Gastrocnemius medialis (tissue), 4 donors: ENCODE measurements at regions of chr1 and their contacts with region 1.

Region 1: DNA sequence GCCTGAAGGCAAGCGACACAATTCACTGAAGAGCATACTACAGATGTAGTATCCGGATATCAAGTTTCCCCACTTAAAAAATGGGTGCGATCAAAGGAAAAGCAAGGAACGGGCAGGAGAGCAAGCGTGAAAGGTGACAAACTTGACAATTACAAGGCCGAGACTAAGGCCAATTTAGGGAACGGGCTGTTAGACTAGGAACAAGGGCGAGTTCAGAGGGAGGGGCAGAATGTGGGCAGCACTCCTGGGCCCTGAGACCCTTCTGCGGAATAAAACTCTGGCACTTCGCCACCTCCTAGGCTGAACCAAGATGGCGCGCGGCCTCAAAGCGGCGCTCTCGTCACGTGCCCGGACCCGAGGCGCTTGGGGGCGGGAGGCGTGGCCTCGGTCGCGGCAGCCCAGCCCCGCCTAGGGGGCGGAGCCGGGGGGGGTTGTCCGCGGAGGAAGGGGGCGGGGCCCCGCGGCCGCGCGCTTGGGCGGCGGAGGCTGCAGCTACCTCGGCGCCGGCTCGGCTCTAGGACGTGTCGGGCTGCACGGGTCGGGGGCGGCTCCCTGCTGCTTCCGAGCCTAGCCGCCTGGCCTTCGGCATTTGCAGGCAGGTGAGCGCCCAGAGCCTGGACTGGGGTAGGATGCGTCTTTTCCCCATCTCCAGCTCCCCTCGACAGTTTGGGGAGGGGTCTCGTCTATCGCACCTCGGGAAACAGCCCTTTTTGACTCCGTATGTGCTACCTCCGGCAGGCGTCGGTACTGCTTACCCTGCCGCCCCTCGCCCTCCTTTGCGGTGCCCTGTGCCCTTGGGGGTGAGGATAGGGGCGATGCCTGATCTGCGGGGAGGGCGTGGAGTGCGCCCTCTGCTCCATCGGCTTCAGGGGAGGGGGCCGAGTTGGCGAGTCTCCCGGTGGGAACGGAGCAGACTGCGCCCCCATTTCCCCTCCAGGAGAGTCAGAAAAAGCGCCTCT is at the start of gene PPFIA4:
- DNase-seq: peak; percentile 75 to 85
- ATAC-seq: peak; percentile 57 to 59
- H3K4me3 ChIP-seq: peak within 1 kb of the TSS; percentile 74 to 89 (median 85)
- H3K27ac ChIP-seq: peak within 1 kb of the TSS; percentile 89 to 98 (median 94)
- H3K4me1 ChIP-seq: peaks cover 29 to 42% of the 10 kb centered on the region in 2 donors
- H3K27me3 ChIP-seq: no peaks in the 10 kb centered on the region
- CTCF ChIP-seq: peak in 4 of 5 experiments; percentile 6 to 25 (median 10)
- POLR2A ChIP-seq: peak; percentile 90 to 95
- total RNA-seq, gene PPFIA4: 8.4 to 45.5 (median 33.1) TPM

Region 2: GRCh38 chr1:202957733-202958543 is 68.4 kb before region 1 on chr1 and contains the start of gene ADIPOR1:
- in situ Hi-C with region 1: no loop called
- intact Hi-C with region 1: loop called (anchors 2 kb)
- DNase-seq: peak; percentile 91 to 93
- ATAC-seq: peak; percentile 43 to 49
- H3K4me3 ChIP-seq: peak within 1 kb of the TSS; percentile 85 to 98 (median 94)
- H3K27ac ChIP-seq: peak within 1 kb of the TSS; percentile 98 to 100 (median 100)
- H3K4me1 ChIP-seq: peaks cover 79 to 80% of the 10 kb centered on the region in 2 donors
- H3K27me3 ChIP-seq: no peaks in the 10 kb centered on the region
- CTCF ChIP-seq: no peak
- POLR2A ChIP-seq: peak; percentile 97 to 98
- total RNA-seq, gene ADIPOR1: 103 to 133 (median 119) TPM

Region 3: GRCh38 chr1:203006948-203007871 is 19.1 kb before region 1 on chr1 and contains the start of gene TMEM183A:
- in situ Hi-C with region 1: no loop called
- intact Hi-C with region 1: loop called (anchors 2 kb)
- DNase-seq: peak; percentile 93 to 96
- ATAC-seq: peak; percentile 96 to 98
- H3K4me3 ChIP-seq: peak within 1 kb of the TSS; percentile 91 to 100 (median 98)
- H3K27ac ChIP-seq: peak within 1 kb of the TSS; percentile 93 to 99 (median 97)
- H3K4me1 ChIP-seq: peaks cover 17 to 22% of the 10 kb centered on the region in 2 donors
- H3K27me3 ChIP-seq: no peaks in the 10 kb centered on the region
- CTCF ChIP-seq: no peak
- POLR2A ChIP-seq: peak; percentile 95 to 97
- total RNA-seq, gene TMEM183A: 28.7 to 41.4 (median 30.6) TPM

Region 4: GRCh38 chr1:204411451-204412204 is 1385.3 kb after region 1 on chr1 and contains the start of gene PPP1R15B:
- in situ Hi-C with region 1: no loop called
- intact Hi-C with region 1: loop called (anchors 5 kb)
- DNase-seq: peak; percentile 95 to 98
- ATAC-seq: peak; percentile 84 to 86
- H3K4me3 ChIP-seq: peak within 1 kb of the TSS; percentile 96 to 100 (median 98)
- H3K27ac ChIP-seq: peak within 1 kb of the TSS; percentile 99 to 100 (median 100)
- H3K4me1 ChIP-seq: peaks cover 12 to 17% of the 10 kb centered on the region in 2 donors
- H3K27me3 ChIP-seq: no peaks in the 10 kb centered on the region
- CTCF ChIP-seq: no peak
- POLR2A ChIP-seq: peak; percentile 95 to 98
- total RNA-seq, gene PPP1R15B: 23.8 to 33.0 (median 25.9) TPM